ENCODE measurements at regions of chr16 and their contacts with region 1.

Region 1: GRCh38 chr16:19245326-19245925 is 40.1 kb upstream of the CLEC19A start:
- DNase-seq: no peak
- ATAC-seq: no peak
- H3K4me3 ChIP-seq: no peak overlapping the region
- H3K27ac ChIP-seq: no peak overlapping the region
- H3K4me1 ChIP-seq: no peaks in the 10 kb centered on the region
- H3K27me3 ChIP-seq: no peaks in the 10 kb centered on the region
- CTCF ChIP-seq: no peak

Region 2: GRCh38 chr16:19184823-19185509 is 60.5 kb before region 1 on chr16:
- CTCF ChIA-PET with region 1: no interaction called
- POLR2A ChIA-PET with region 1: interaction called, 19 read pairs
- in situ Hi-C with region 1: no loop called
- intact Hi-C with region 1: no loop called
- DNase-seq: no peak
- ATAC-seq: no peak
- H3K4me3 ChIP-seq: no peak overlapping the region
- H3K27ac ChIP-seq: no peak overlapping the region
- H3K4me1 ChIP-seq: no peaks in the 10 kb centered on the region
- H3K27me3 ChIP-seq: no peaks in the 10 kb centered on the region
- CTCF ChIP-seq: no peak

Region 3: GRCh38 chr16:19316846-19317245 is 71.4 kb after region 1 on chr16:
- CTCF ChIA-PET with region 1: no interaction called
- POLR2A ChIA-PET with region 1: interaction called, 10 read pairs
- in situ Hi-C with region 1: no loop called
- intact Hi-C with region 1: no loop called
- DNase-seq: no peak
- ATAC-seq: no peak
- H3K4me3 ChIP-seq: no peak overlapping the region
- H3K27ac ChIP-seq: no peak overlapping the region
- H3K4me1 ChIP-seq: no peaks in the 10 kb centered on the region
- H3K27me3 ChIP-seq: peaks cover 2% of the 10 kb centered on the region; the same call in 1 of the 2 replicates
- CTCF ChIP-seq: no peak

Region 4: DNA sequence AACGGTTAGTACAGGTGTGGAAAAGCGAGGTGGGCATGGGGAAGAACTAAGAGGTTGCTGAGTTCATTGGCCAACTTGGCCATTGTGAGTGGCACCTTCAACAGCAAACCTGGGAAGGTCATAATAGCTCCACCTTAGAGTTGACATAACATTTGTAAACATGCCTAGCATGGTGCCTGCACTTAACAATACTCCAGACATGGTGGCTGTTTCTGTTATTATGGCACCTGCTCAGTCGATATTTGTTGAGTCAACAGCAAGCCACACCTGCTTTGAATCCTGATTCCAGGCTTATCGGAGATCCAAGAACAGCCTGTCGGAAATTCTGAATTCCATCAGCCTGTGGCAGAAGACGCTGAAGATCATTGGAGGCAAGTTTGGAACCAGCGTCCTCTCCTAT is 218.1 kb after region 1 on chr16:
- CTCF ChIA-PET with region 1: no interaction called
- POLR2A ChIA-PET with region 1: no interaction called
- in situ Hi-C with region 1: no loop called
- intact Hi-C with region 1: no loop called
- DNase-seq: no peak
- ATAC-seq: no peak
- H3K4me3 ChIP-seq: no peak overlapping the region
- H3K27ac ChIP-seq: no peak overlapping the region
- H3K4me1 ChIP-seq: no peaks in the 10 kb centered on the region
- H3K27me3 ChIP-seq: no peaks in the 10 kb centered on the region
- CTCF ChIP-seq: no peak

Measured in Panc1 (cell line).